ENCODE measurements at regions of chr16 and their contacts with region 1.

Region 1: GRCh38 chr16:68093816-68094613 is 8.8 kb downstream of the NFATC3 start:
- DNase-seq: peak; percentile 69
- ATAC-seq: peak; percentile 69
- H3K4me3 ChIP-seq: no peak overlapping the region
- H3K27ac ChIP-seq: no peak overlapping the region
- H3K4me1 ChIP-seq: peaks cover 2% of the 10 kb centered on the region; the same call in 1 of the 2 replicates
- H3K27me3 ChIP-seq: no peaks in the 10 kb centered on the region
- CTCF ChIP-seq: peak; percentile 54
- POLR2A ChIP-seq: no peak
- RAD21 ChIP-seq: peak; percentile 56

Region 2: DNA sequence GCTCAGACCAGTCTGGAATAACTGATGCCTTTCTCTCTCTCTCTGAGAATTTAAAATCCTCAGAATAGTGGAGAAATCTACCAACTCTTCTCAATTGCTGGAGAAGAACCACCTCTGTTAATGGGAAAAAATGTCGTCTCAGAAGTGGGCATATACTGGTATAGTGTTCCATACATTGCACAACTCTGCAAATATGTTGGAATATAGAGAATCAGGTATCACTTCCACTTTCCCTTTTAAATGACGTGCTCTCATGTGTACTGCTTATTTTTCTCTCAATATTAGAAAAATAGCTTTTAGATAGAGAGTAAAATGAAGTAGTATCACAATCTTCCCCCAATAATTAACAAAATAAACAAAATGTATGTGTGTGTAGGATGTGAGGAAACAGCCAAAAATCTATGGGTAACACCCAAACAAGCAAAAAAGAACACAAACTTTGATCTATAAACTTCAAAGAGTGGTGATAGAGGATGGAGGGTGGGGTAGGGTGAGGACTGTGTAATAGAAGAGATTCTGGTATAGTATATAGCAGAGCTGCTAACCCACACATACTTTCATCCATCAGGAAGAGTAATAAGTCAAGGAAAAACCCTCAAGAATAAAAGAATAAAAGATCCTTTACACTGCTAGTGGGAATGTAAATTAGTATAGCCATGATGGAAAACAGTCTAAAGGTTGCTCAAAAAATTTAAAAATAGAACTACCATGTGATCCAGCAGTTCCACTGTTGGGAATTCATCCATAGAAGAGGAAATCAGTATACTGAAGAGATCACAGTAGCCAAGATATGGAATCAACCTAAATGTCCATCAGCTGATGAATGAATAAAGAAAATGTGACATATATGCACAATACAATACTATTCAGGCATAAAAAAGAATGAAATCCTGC is 38.0 kb after region 1 on chr16:
- CTCF ChIA-PET with region 1: no interaction called
- POLR2A ChIA-PET with region 1: no interaction called
- dilution Hi-C with region 1: no loop called
- in situ Hi-C with region 1: no loop called
- intact Hi-C with region 1: loop called (anchors 5 kb)
- DNase-seq: no peak
- ATAC-seq: no peak
- H3K4me3 ChIP-seq: no peak overlapping the region
- H3K27ac ChIP-seq: no peak overlapping the region
- H3K4me1 ChIP-seq: peaks cover 2% of the 10 kb centered on the region; the same call in 1 of the 2 replicates
- H3K27me3 ChIP-seq: no peaks in the 10 kb centered on the region
- CTCF ChIP-seq: no peak
- POLR2A ChIP-seq: no peak
- RAD21 ChIP-seq: no peak

Region 3: DNA sequence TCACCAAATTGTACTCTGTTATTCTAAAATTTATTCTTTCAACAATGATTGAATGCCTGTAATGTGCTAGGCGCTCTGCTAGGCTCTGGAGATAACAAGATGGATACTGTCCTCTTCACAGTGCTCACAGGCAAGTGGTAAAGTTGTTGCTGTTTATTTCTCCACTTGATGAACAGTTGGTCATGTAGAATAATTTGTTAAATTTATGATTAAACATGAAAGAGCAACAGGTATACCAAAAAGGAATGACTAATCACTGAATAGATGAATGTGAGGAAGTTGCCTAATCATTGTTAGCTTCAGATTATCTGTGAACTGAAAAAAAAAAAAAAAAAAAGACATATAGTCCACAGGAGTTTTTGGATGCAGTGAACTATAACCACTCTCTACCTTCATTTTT is 53.4 kb after region 1 on chr16:
- CTCF ChIA-PET with region 1: no interaction called
- POLR2A ChIA-PET with region 1: no interaction called
- dilution Hi-C with region 1: no loop called
- in situ Hi-C with region 1: no loop called
- intact Hi-C with region 1: no loop called
- DNase-seq: no peak
- ATAC-seq: no peak
- H3K4me3 ChIP-seq: no peak overlapping the region
- H3K27ac ChIP-seq: no peak overlapping the region
- H3K4me1 ChIP-seq: peaks cover 2% of the 10 kb centered on the region
- H3K27me3 ChIP-seq: no peaks in the 10 kb centered on the region
- CTCF ChIP-seq: no peak
- POLR2A ChIP-seq: no peak
- RAD21 ChIP-seq: no peak